Testis (tissue), 5 donors: ENCODE measurements at regions of chr3 and their contacts with region 1.

Region 1: GRCh38 chr3:184362668-184363540 is 1.4 kb downstream of the POLR2H start:
- DNase-seq: peak; percentile 96
- H3K4me3 ChIP-seq: peak overlapping the region; percentile 85 to 86
- H3K27ac ChIP-seq: peak overlapping the region; percentile 96 to 98
- H3K4me1 ChIP-seq: peaks cover 39% of the 10 kb centered on the region
- H3K27me3 ChIP-seq: no peaks in the 10 kb centered on the region
- CTCF ChIP-seq: peak; percentile 37 to 55 (median 48)
- POLR2A ChIP-seq: peak; percentile 67

Region 2: DNA sequence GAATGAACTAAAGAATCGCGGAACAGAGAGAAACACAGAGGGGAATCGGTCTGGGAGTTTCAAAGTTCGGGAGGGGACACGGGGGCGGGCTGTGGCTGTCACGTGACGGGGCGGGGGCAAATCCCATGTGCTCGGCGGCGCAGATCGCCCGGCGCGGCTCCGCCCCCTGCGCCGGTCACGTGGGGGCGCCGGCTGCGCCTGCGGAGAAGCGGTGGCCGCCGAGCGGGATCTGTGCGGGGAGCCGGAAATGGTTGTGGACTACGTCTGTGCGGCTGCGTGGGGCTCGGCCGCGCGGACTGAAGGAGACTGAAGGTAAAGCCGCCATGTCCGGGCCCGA is 48.6 kb before region 1 on chr3 and contains the start of gene EIF4G1:
- intact Hi-C with region 1: loop called (anchors 10 kb)
- DNase-seq: peak; percentile 97
- H3K4me3 ChIP-seq: peak within 1 kb of the TSS; percentile 82 to 85
- H3K27ac ChIP-seq: peak within 1 kb of the TSS; percentile 94 to 98
- H3K4me1 ChIP-seq: peaks cover 30% of the 10 kb centered on the region
- H3K27me3 ChIP-seq: no peaks in the 10 kb centered on the region
- CTCF ChIP-seq: no peak
- POLR2A ChIP-seq: peak; percentile 57
- total RNA-seq, gene EIF4G1: 295 TPM

Region 3: GRCh38 chr3:184691397-184692231 is 328.7 kb after region 1 on chr3:
- intact Hi-C with region 1: no loop called
- DNase-seq: peak; percentile 43
- H3K4me3 ChIP-seq: no peak overlapping the region
- H3K27ac ChIP-seq: peak overlapping the region; percentile 32 to 66
- H3K4me1 ChIP-seq: peaks cover 24% of the 10 kb centered on the region
- H3K27me3 ChIP-seq: no peaks in the 10 kb centered on the region
- CTCF ChIP-seq: no peak
- POLR2A ChIP-seq: no peak

Region 4: GRCh38 chr3:185242605-185243004 is 879.7 kb after region 1 on chr3:
- intact Hi-C with region 1: no loop called
- DNase-seq: no peak
- H3K4me3 ChIP-seq: no peak overlapping the region
- H3K27ac ChIP-seq: no peak overlapping the region
- H3K4me1 ChIP-seq: no peaks in the 10 kb centered on the region
- H3K27me3 ChIP-seq: no peaks in the 10 kb centered on the region
- CTCF ChIP-seq: no peak
- POLR2A ChIP-seq: no peak